Heart right ventricle (tissue), 16 donors: ENCODE measurements at regions of chr12 and their contacts with region 1.

Region 1: DNA sequence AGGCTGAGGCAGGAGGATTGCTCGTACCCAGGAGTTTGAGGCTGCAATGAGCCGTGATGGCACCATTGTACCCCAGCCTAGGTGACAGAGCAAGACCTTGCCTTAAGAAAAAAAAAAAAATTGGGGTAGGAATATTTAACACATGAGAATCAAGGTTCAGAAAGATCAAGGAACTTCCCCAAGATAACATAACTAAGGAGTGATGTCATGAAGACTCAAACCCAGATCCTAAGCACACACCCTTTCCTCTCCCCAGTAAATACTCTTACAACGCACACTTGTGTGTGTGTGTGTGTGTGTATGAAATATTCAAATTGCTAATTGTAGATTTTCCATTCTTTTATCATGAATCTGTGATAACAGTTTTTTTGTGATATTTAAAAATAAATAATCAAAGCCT is 90.6 kb upstream of the NUDT4 start:
- DNase-seq: no peak
- ATAC-seq: no peak
- H3K4me3 ChIP-seq: no peak overlapping the region
- H3K27ac ChIP-seq: no peak overlapping the region
- H3K4me1 ChIP-seq: peaks cover 0 to 3% (median 0%) of the 10 kb centered on the region in 9 donors
- H3K27me3 ChIP-seq: no peaks in the 10 kb centered on the region
- CTCF ChIP-seq: no peak

Region 2: DNA sequence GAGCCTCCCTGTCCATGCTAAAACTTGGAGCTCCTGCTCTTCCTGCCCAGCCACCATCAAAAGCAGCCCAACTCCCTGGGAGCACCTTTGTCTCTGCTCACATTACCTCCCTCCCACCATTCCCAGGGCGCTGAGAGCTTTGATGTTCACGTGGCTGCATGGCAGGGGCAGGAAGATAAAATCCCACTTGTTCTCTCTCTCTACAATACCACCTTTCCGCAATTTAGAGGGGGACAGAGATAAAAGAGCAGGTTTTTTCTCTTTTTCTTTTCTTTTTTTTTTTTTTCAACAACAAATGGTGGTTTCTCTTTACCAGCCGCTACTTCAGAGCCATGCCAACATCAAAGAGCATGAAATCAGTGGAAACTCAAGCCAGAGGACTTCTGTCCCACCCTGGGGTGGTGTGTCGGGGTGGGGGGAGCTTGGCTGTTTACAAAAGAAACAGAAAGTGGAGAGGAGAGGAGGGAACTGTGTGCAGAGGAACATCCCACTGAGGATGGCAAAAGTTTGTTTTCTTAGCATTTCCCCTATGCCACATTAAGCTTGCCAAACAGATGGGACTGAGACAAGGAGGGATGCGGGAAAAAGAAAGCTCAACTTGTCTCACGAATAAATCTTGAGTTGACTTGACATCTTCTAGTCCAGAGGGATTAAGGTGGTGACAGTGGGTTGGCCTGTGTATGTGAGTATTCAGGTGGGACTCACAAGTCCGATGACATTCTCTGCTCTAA is 13.2 kb before region 1 on chr12:
- intact Hi-C with region 1: loop called in 1 of 10 experiments (anchors 1 kb)
- DNase-seq: no peak
- ATAC-seq: no peak
- H3K4me3 ChIP-seq: no peak overlapping the region
- H3K27ac ChIP-seq: no peak overlapping the region
- H3K4me1 ChIP-seq: no peaks in the 10 kb centered on the region
- H3K27me3 ChIP-seq: no peaks in the 10 kb centered on the region
- CTCF ChIP-seq: no peak

Region 3: GRCh38 chr12:93502802-93503623 is 215.9 kb after region 1 on chr12:
- intact Hi-C with region 1: no loop called
- DNase-seq: peak in 1 of 2 donors; percentile 46
- ATAC-seq: no peak
- H3K4me3 ChIP-seq: no peak overlapping the region
- H3K27ac ChIP-seq: no peak overlapping the region
- H3K4me1 ChIP-seq: peaks cover 0 to 6% (median 0%) of the 10 kb centered on the region in 9 donors
- H3K27me3 ChIP-seq: no peaks in the 10 kb centered on the region
- CTCF ChIP-seq: peak; percentile 67 to 89 (median 82)